ENCODE measurements at regions of chr10 and their contacts with region 1.

Region 1: DNA sequence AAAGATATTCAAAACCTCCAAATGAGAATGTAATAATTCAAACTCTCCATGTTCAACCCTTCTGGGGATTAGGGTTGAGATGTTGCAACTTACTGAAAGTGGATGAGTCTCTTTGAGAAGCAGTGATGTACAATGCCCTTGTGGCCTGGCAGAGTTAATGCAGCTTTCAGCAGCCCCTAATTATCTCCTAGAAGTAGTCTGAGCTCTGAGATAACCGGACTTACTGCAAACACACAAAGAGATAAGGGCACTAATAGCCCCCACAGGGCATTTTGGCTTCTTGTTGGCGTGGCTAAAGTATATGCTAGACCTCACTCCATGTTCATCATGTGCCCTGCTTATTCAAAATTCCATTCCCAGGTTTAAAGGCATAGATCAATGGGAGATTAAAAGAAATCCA is 404.7 kb downstream of the NEBL start:
- DNase-seq: no peak
- ATAC-seq: no peak
- H3K4me3 ChIP-seq: no peak overlapping the region
- H3K27ac ChIP-seq: no peak overlapping the region
- H3K4me1 ChIP-seq: no peaks in the 10 kb centered on the region
- H3K27me3 ChIP-seq: no peaks in the 10 kb centered on the region
- CTCF ChIP-seq: no peak

Region 2: GRCh38 chr10:20891338-20891714 is 398.9 kb after region 1 on chr10:
- intact Hi-C with region 1: loop called in 1 of 2 experiments (anchors 5 kb)
- DNase-seq: no peak
- ATAC-seq: no peak
- H3K4me3 ChIP-seq: no peak overlapping the region
- H3K27ac ChIP-seq: no peak overlapping the region
- H3K4me1 ChIP-seq: no peaks in the 10 kb centered on the region
- H3K27me3 ChIP-seq: no peaks in the 10 kb centered on the region
- CTCF ChIP-seq: no peak